Endothelial cell of umbilical vein (primary cell): ENCODE measurements at regions of chr20 and their contacts with region 1.

Region 1: DNA sequence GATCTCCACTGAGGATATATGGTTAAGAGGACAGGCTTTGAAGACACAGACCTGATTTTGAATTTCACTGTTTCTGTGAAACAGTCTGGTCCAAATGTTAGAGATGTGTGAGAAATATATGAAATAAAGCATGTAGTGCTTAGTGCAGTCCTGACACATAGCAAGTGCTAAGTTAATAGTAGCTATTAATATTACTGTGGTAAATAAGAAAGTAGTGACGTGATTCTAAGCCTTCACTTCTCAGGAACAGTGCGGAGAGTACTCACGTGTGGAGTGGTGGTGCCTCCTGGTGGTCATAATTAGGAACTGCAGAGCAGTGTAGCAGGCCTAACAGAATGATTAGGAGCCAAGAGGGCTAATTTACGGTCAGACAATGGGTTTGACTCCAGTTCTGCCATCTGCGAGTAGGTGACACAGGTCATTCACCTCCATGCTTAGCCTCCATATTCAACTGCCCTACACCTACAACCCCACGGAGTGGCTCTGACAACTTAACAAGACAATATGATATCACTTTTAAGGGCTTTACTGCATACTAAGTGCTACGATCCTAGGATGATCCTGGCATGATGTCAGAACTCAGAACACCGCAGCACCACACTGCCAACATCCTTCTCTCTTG is 106.2 kb downstream of the JPH2 start:
- DNase-seq: peak; percentile 79
- H3K4me3 ChIP-seq: no peak overlapping the region
- H3K27ac ChIP-seq: no peak overlapping the region
- H3K4me1 ChIP-seq: no peaks in the 10 kb centered on the region
- H3K27me3 ChIP-seq: no peaks in the 10 kb centered on the region
- CTCF ChIP-seq: peak; percentile 81 to 98
- POLR2A ChIP-seq: no peak

Region 2: GRCh38 chr20:43448748-43449535 is 631.8 kb before region 1 on chr20:
- CTCF ChIA-PET with region 1: interaction called, 11 read pairs
- POLR2A ChIA-PET with region 1: no interaction called
- dilution Hi-C with region 1: no loop called
- intact Hi-C with region 1: loop called (anchors 1 kb)
- DNase-seq: peak; percentile 78
- H3K4me3 ChIP-seq: no peak overlapping the region
- H3K27ac ChIP-seq: no peak overlapping the region
- H3K4me1 ChIP-seq: peaks cover 7% of the 10 kb centered on the region
- H3K27me3 ChIP-seq: peaks cover 10 to 16% of the 10 kb centered on the region in 2 experiments
- CTCF ChIP-seq: peak; percentile 67 to 68
- POLR2A ChIP-seq: no peak

Region 3: GRCh38 chr20:43840382-43841070 is 240.2 kb before region 1 on chr20:
- CTCF ChIA-PET with region 1: interaction called, 13 read pairs
- POLR2A ChIA-PET with region 1: no interaction called
- dilution Hi-C with region 1: no loop called
- intact Hi-C with region 1: loop called (anchors 1 kb)
- DNase-seq: no peak
- H3K4me3 ChIP-seq: no peak overlapping the region
- H3K27ac ChIP-seq: no peak overlapping the region
- H3K4me1 ChIP-seq: peaks cover 24% of the 10 kb centered on the region
- H3K27me3 ChIP-seq: no peaks in the 10 kb centered on the region
- CTCF ChIP-seq: peak; percentile 10 to 52
- POLR2A ChIP-seq: no peak

Region 4: GRCh38 chr20:43955062-43955749 is 125.6 kb before region 1 on chr20:
- CTCF ChIA-PET with region 1: interaction called, 4 read pairs
- POLR2A ChIA-PET with region 1: no interaction called
- dilution Hi-C with region 1: no loop called
- intact Hi-C with region 1: loop called (anchors 1 kb)
- DNase-seq: peak; percentile 92
- H3K4me3 ChIP-seq: no peak overlapping the region
- H3K27ac ChIP-seq: peak overlapping the region; percentile 80
- H3K4me1 ChIP-seq: peaks cover 47% of the 10 kb centered on the region
- H3K27me3 ChIP-seq: no peaks in the 10 kb centered on the region
- CTCF ChIP-seq: no peak
- POLR2A ChIP-seq: peak; percentile 41

Region 5: DNA sequence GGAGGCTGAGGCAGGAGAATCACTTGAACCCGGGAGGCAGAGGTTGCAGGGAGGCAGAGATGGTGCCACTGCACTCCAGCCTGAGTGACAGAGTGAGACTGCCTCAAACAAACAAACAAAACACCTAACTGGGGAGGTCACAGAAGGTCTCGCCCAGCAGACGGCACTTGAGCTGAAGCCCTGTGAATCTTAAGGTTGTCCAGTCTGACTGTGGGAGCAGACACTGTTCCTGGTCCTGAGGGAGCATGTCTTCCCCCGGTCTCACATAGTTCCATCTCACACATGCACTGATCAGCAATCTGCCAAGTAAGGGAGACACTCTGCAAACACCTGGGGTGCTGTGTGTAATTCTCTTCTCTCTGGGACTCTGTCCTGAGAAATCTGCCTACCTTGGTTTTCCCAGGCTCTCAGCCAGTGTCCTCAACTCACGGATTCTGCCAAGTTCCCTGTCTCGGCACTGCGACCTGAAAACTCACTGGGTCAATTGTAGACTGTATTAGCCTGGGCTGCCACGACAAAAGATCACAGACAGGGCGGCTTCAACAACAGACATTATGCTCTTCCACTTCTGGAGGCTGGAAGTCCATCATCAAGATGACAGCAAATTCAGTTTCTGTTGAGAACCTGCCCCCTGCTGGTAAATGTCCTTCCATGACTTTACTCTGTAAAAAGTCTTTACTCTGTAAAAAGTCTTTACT is 11.9 kb after region 1 on chr20:
- CTCF ChIA-PET with region 1: interaction called, 19 read pairs
- POLR2A ChIA-PET with region 1: no interaction called
- dilution Hi-C with region 1: no loop called
- intact Hi-C with region 1: no loop called
- DNase-seq: peak; percentile 45
- H3K4me3 ChIP-seq: no peak overlapping the region
- H3K27ac ChIP-seq: no peak overlapping the region
- H3K4me1 ChIP-seq: no peaks in the 10 kb centered on the region
- H3K27me3 ChIP-seq: peaks cover 2% of the 10 kb centered on the region in 2 experiments
- CTCF ChIP-seq: peak; percentile 47 to 52
- POLR2A ChIP-seq: no peak

Region 6: GRCh38 chr20:44609511-44610312 is 529.0 kb after region 1 on chr20:
- CTCF ChIA-PET with region 1: no interaction called
- POLR2A ChIA-PET with region 1: no interaction called
- dilution Hi-C with region 1: no loop called
- intact Hi-C with region 1: no loop called
- DNase-seq: peak; percentile 91
- H3K4me3 ChIP-seq: no peak overlapping the region
- H3K27ac ChIP-seq: peak overlapping the region; percentile 53
- H3K4me1 ChIP-seq: peaks cover 16% of the 10 kb centered on the region
- H3K27me3 ChIP-seq: no peaks in the 10 kb centered on the region
- CTCF ChIP-seq: peak; percentile 97 to 98
- POLR2A ChIP-seq: no peak